Panc1 (cell line): ENCODE measurements at regions of chrX and their contacts with region 1.

Region 1: GRCh38 chrX:70769659-70770232 is 138.8 kb downstream of the TEX11 start:
- DNase-seq: no peak
- ATAC-seq: no peak
- H3K4me3 ChIP-seq: no peak overlapping the region
- H3K27ac ChIP-seq: no peak overlapping the region
- H3K4me1 ChIP-seq: no peaks in the 10 kb centered on the region
- H3K27me3 ChIP-seq: no peaks in the 10 kb centered on the region; the same call in 1 of the 2 replicates
- CTCF ChIP-seq: peak; percentile 40; the same call in 1 of the 2 replicates

Region 2: DNA sequence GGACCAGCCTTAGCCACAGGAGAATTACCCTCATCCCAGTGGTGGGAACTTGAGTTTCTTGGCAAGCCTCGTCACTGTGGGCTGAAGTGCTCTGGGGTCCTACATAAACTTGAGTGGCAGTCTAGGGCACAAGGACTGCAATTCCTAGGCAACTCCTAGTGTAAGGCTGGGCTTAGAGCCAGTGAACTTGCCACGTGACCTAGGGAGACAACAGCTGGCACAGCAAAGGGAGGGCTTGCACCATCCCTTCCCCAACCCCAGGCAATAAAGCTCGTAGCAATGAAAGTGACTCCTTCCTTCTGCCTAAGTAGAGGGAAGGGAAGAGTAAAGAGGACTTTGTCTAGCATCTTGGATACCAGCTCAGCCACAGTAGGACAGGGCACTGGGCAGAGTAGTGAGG is 57.0 kb after region 1 on chrX:
- CTCF ChIA-PET with region 1: no interaction called
- POLR2A ChIA-PET with region 1: no interaction called
- in situ Hi-C with region 1: no loop called
- intact Hi-C with region 1: no loop called
- DNase-seq: no peak
- ATAC-seq: no peak
- H3K4me3 ChIP-seq: no peak overlapping the region
- H3K27ac ChIP-seq: no peak overlapping the region
- H3K4me1 ChIP-seq: no peaks in the 10 kb centered on the region
- H3K27me3 ChIP-seq: no peaks in the 10 kb centered on the region
- CTCF ChIP-seq: no peak

Region 3: DNA sequence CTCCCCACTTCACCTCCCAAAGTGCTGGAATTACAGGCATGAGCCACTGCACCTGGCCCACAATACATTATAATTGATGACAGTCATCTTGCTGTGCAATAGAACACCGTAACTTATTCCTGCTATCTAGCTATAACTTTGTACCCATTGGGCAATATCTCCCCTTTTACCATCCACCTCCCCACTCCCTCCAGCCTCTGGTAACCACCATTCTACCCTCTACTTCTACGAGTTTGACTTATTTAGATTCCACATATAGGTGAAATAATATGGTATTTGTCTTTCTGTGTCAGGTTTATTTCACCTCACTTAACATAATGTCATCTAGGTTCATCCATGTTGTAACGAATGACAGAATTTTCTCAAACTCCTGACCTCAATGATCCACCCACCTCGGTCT is 147.0 kb after region 1 on chrX:
- CTCF ChIA-PET with region 1: no interaction called
- POLR2A ChIA-PET with region 1: no interaction called
- in situ Hi-C with region 1: no loop called
- intact Hi-C with region 1: no loop called
- DNase-seq: no peak
- ATAC-seq: no peak
- H3K4me3 ChIP-seq: no peak overlapping the region
- H3K27ac ChIP-seq: no peak overlapping the region
- H3K4me1 ChIP-seq: no peaks in the 10 kb centered on the region
- H3K27me3 ChIP-seq: no peaks in the 10 kb centered on the region
- CTCF ChIP-seq: no peak

Region 4: GRCh38 chrX:70960728-70961127 is 191.0 kb after region 1 on chrX:
- CTCF ChIA-PET with region 1: no interaction called
- POLR2A ChIA-PET with region 1: no interaction called
- in situ Hi-C with region 1: no loop called
- intact Hi-C with region 1: loop called (anchors 5 kb)
- DNase-seq: no peak
- ATAC-seq: no peak
- H3K4me3 ChIP-seq: no peak overlapping the region
- H3K27ac ChIP-seq: no peak overlapping the region
- H3K4me1 ChIP-seq: no peaks in the 10 kb centered on the region
- H3K27me3 ChIP-seq: 0 out of 2 replicates have a peak, but pooled peaks cover 2% of the 10 kb centered on the region
- CTCF ChIP-seq: peak; percentile 55; the same call in 1 of the 2 replicates

Region 5: DNA sequence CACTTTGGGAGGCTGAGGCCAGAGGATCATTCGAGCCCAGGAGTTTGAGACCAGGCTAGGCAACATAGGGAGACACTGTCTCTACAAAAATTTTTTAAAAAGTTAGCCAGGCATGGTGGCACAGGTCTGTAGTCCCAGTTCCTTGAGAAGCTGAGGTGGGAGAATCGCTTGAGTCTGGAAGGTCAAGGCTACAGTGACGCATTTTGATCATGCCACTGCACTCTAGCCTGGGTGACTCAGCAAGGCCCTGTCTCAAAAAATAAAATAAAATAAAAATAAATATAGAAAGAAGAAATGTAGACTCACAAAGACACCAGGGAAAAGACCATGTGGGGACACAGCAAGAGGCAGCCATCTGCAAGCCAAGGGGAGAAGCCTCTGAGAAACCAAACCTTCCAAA is 203.5 kb after region 1 on chrX:
- CTCF ChIA-PET with region 1: no interaction called
- POLR2A ChIA-PET with region 1: no interaction called
- in situ Hi-C with region 1: no loop called
- intact Hi-C with region 1: no loop called
- DNase-seq: no peak
- ATAC-seq: no peak
- H3K4me3 ChIP-seq: no peak overlapping the region
- H3K27ac ChIP-seq: no peak overlapping the region
- H3K4me1 ChIP-seq: no peaks in the 10 kb centered on the region
- H3K27me3 ChIP-seq: no peaks in the 10 kb centered on the region; the same call in 1 of the 2 replicates
- CTCF ChIP-seq: no peak